H1 (cell line): ENCODE measurements at regions of chr2 and their contacts with region 1.

Region 1: GRCh38 chr2:231612179-231613053 is 19.8 kb downstream of the TEX44 start:
- DNase-seq: peak in 1 of 2 experiments; percentile 95
- H3K4me3 ChIP-seq: peak overlapping the region in 1 of 4 experiments; percentile 68; a peak in 2 of 8 replicates
- H3K27ac ChIP-seq: peak overlapping the region; percentile 89
- H3K4me1 ChIP-seq: peaks cover 6 to 33% (median 32%) of the 10 kb centered on the region in 4 experiments
- H3K27me3 ChIP-seq: no peaks in the 10 kb centered on the region
- CTCF ChIP-seq: peak in 2 of 3 experiments; percentile 83 to 87; a peak in 3 of 4 replicates
- EP300 ChIP-seq: 0 out of 3 replicates have a peak, but pooled peaks of 1 of the 2 experiments have one; percentile 77
- POLR2A ChIP-seq: peak in 1 of 2 experiments; percentile 64; a peak in 2 of 3 replicates
- RAD21 ChIP-seq: peak; percentile 90 to 95

Region 2: GRCh38 chr2:231522799-231523180 is 89.6 kb before region 1 on chr2:
- CTCF ChIA-PET with region 1: interaction called, 10 read pairs
- POLR2A ChIA-PET with region 1: no interaction called
- DNase-seq: no peak
- H3K4me3 ChIP-seq: no peak overlapping the region
- H3K27ac ChIP-seq: no peak overlapping the region
- H3K4me1 ChIP-seq: peaks cover 0 to 4% (median 2%) of the 10 kb centered on the region in 4 experiments; a peak in 1 of 7 replicates
- H3K27me3 ChIP-seq: no peaks in the 10 kb centered on the region
- CTCF ChIP-seq: no peak
- EP300 ChIP-seq: no peak
- POLR2A ChIP-seq: no peak
- RAD21 ChIP-seq: no peak

Region 3: GRCh38 chr2:231590619-231591018 is 21.8 kb before region 1 on chr2:
- CTCF ChIA-PET with region 1: interaction called, 11 read pairs
- POLR2A ChIA-PET with region 1: interaction called, 6 read pairs
- DNase-seq: no peak
- H3K4me3 ChIP-seq: no peak overlapping the region
- H3K27ac ChIP-seq: no peak overlapping the region
- H3K4me1 ChIP-seq: peaks cover 0 to 6% (median 2%) of the 10 kb centered on the region in 4 experiments; a peak in 2 of 7 replicates
- H3K27me3 ChIP-seq: no peaks in the 10 kb centered on the region
- CTCF ChIP-seq: no peak
- EP300 ChIP-seq: no peak
- POLR2A ChIP-seq: no peak
- RAD21 ChIP-seq: no peak

Region 4: DNA sequence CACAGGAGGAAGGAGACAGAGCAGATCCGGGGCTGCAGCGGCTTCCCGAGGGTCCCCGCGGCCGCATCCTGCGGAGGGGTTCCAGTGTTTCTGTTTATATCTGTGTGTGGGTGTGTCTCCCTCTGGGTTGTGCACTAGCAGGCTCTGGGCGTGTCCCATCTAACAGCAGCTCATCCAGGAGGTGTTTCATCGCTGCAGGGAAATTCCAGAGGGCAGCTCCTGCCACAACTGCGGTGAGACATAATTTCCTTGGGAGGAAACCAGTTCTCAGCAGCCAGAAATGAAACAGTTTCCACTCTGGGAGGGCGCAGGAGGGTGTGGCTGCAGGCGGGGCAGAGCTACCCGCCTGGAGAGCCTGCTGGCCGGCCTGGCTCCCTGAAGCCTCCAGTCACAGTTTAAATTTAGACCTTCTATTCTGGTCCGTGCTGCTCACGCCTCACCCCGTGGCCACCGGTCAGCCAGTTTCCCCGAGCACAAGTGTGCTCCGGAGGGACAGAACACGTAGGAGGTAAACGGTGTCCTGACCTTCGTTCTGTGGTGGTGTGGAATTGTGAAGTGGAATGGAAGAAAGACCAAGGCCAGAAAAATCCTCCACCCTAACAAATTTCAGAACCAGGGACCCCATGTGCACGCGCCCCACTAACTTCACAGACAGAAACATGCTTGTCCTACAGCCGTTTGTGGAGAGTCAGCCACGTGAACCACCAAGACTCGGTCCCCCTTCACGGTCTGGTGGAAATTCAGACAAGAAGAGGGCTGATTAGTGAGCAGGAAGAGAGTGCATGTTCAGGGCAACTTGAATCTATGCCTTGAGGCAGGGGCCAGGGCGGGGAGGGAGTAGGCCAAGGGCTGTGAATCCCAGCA is 30.4 kb after region 1 on chr2:
- CTCF ChIA-PET with region 1: interaction called, 22 read pairs
- POLR2A ChIA-PET with region 1: interaction called, 15 read pairs
- DNase-seq: no peak
- H3K4me3 ChIP-seq: no peak overlapping the region
- H3K27ac ChIP-seq: no peak overlapping the region
- H3K4me1 ChIP-seq: peaks cover 3 to 9% (median 3%) of the 10 kb centered on the region in 4 experiments; a peak in 5 of 7 replicates
- H3K27me3 ChIP-seq: no peaks in the 10 kb centered on the region
- CTCF ChIP-seq: no peak
- EP300 ChIP-seq: no peak
- POLR2A ChIP-seq: no peak
- RAD21 ChIP-seq: no peak

Region 5: GRCh38 chr2:231680992-231681853 is 68.8 kb after region 1 on chr2:
- CTCF ChIA-PET with region 1: interaction called, 513 read pairs
- POLR2A ChIA-PET with region 1: interaction called, 223 read pairs
- DNase-seq: peak in 1 of 2 experiments; percentile 91
- H3K4me3 ChIP-seq: peak overlapping the region; percentile 66 to 88 (median 70)
- H3K27ac ChIP-seq: peak overlapping the region; percentile 99
- H3K4me1 ChIP-seq: peaks cover 0 to 40% (median 24%) of the 10 kb centered on the region in 4 experiments; a peak in 6 of 7 replicates
- H3K27me3 ChIP-seq: no peaks in the 10 kb centered on the region
- CTCF ChIP-seq: no peak
- EP300 ChIP-seq: no peak
- POLR2A ChIP-seq: peak in 1 of 2 experiments; percentile 80; a peak in 2 of 3 replicates
- RAD21 ChIP-seq: no peak; a peak in 1 of 4 replicates

Region 6: GRCh38 chr2:231706731-231707624 is 94.6 kb after region 1 on chr2:
- CTCF ChIA-PET with region 1: interaction called, 29 read pairs
- POLR2A ChIA-PET with region 1: interaction called, 141 read pairs
- DNase-seq: peak; percentile 96 to 98
- H3K4me3 ChIP-seq: peak overlapping the region; percentile 85 to 96 (median 90)
- H3K27ac ChIP-seq: peak overlapping the region; percentile 99
- H3K4me1 ChIP-seq: peaks cover 0 to 14% (median 8%) of the 10 kb centered on the region in 4 experiments; a peak in 6 of 7 replicates
- H3K27me3 ChIP-seq: no peaks in the 10 kb centered on the region
- CTCF ChIP-seq: peak in 2 of 3 experiments; percentile 72 to 98; a peak in 3 of 4 replicates
- EP300 ChIP-seq: no peak
- POLR2A ChIP-seq: peak in 1 of 2 experiments; percentile 96; a peak in 2 of 3 replicates
- RAD21 ChIP-seq: no peak; a peak in 1 of 4 replicates